SK-N-SH (cell line): ENCODE measurements at regions of chr1 and their contacts with region 1.

Region 1: GRCh38 chr1:202998836-202999750 is 8.1 kb upstream of the TMEM183A start:
- DNase-seq: peak; percentile 45
- H3K4me3 ChIP-seq: peak overlapping the region in 1 of 2 experiments; percentile 15; a peak in 1 of 4 replicates
- H3K27ac ChIP-seq: no peak overlapping the region
- H3K4me1 ChIP-seq: no peaks in the 10 kb centered on the region
- H3K27me3 ChIP-seq: peaks cover 10% of the 10 kb centered on the region; the same call in 1 of the 2 replicates
- CTCF ChIP-seq: peak; percentile 93
- EP300 ChIP-seq: no peak
- RAD21 ChIP-seq: peak; percentile 85

Region 2: DNA sequence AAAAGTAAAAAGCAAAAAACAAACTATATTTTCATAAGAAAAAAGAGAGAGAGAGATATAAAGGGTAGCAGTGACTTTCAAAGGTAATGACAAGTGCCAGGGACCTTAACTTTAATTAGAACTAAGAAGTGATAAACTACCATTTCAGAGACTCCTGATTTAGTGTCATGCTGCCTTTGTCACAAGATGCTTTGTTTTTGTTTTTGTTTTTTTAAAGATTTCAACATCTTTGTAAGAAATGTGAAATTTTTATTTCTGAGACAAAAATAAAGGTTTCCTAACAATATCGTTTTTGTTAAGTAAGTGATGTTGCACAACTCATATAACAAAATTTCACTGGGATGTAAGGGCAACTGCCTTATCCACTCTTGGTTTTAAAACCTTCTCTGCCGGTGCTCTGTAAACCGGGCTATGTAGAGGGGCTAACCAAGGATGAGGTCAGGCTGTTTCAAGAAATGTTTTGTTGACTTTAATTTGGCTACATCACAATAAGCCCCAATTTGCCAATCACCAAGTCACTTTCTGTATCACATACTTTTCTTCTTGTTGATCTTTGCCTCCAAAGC is 253.7 kb before region 1 on chr1:
- CTCF ChIA-PET with region 1: no interaction called
- POLR2A ChIA-PET with region 1: no interaction called
- DNase-seq: no peak
- H3K4me3 ChIP-seq: no peak overlapping the region
- H3K27ac ChIP-seq: no peak overlapping the region
- H3K4me1 ChIP-seq: no peaks in the 10 kb centered on the region
- H3K27me3 ChIP-seq: no peaks in the 10 kb centered on the region
- CTCF ChIP-seq: no peak
- EP300 ChIP-seq: no peak
- RAD21 ChIP-seq: no peak

Region 3: DNA sequence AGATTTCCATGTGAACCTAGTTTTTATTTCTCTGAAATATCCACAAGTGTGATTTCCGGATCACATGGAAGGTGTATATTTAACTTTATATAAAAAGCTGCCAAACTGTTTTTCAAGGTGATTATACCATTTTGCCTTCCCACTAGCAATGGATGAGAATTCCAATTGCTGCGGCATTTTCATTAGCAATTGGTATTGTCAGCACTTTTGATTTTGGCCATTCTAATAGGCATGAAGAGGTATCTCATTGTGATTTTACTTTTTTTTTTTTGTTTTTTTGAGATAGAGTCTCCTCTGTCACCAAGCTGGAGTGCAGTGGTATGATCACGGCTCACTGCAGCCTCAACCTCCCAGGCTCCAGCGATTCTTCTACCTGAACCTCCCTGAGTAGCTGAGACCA is 27.0 kb before region 1 on chr1:
- CTCF ChIA-PET with region 1: interaction called, 10 read pairs
- POLR2A ChIA-PET with region 1: no interaction called
- DNase-seq: no peak
- H3K4me3 ChIP-seq: no peak overlapping the region
- H3K27ac ChIP-seq: no peak overlapping the region
- H3K4me1 ChIP-seq: peaks cover 0 to 6% of the 10 kb centered on the region in 2 experiments; a peak in 1 of 4 replicates
- H3K27me3 ChIP-seq: peaks cover 33% of the 10 kb centered on the region; the same call in 1 of the 2 replicates
- CTCF ChIP-seq: no peak
- EP300 ChIP-seq: no peak
- RAD21 ChIP-seq: no peak

Region 4: GRCh38 chr1:203166566-203166940 is 167.5 kb after region 1 on chr1:
- CTCF ChIA-PET with region 1: no interaction called
- POLR2A ChIA-PET with region 1: no interaction called
- DNase-seq: no peak
- H3K4me3 ChIP-seq: no peak overlapping the region
- H3K27ac ChIP-seq: no peak overlapping the region
- H3K4me1 ChIP-seq: no peaks in the 10 kb centered on the region
- H3K27me3 ChIP-seq: no peaks in the 10 kb centered on the region
- CTCF ChIP-seq: no peak
- EP300 ChIP-seq: no peak
- RAD21 ChIP-seq: no peak